ENCODE measurements at regions of chr9 and their contacts with region 1.

Region 1: GRCh38 chr9:120783602-120784047 is 9.6 kb downstream of the FBXW2 start:
- DNase-seq: peak; percentile 79 to 94 (median 91)
- H3K4me3 ChIP-seq: no peak overlapping the region
- H3K4me3 Mint-ChIP-seq: no peak overlapping the region
- H3K27ac ChIP-seq: peak overlapping the region in 1 of 2 donors; percentile 63
- H3K27ac Mint-ChIP-seq: peak overlapping the region; percentile 90 to 97 (median 95)
- H3K4me1 ChIP-seq: peaks cover 20 to 36% of the 10 kb centered on the region in 2 donors
- H3K4me1 Mint-ChIP-seq: peaks cover 38% of the 10 kb centered on the region
- H3K27me3 ChIP-seq: no peaks in the 10 kb centered on the region
- H3K27me3 Mint-ChIP-seq: no peaks in the 10 kb centered on the region
- CTCF ChIP-seq: no peak

Region 2: GRCh38 chr9:120663380-120663779 is 120.2 kb before region 1 on chr9:
- intact Hi-C with region 1: no loop called
- DNase-seq: peak; percentile 26 to 63 (median 46)
- H3K4me3 ChIP-seq: peak overlapping the region in 1 of 3 experiments; percentile 4
- H3K4me3 Mint-ChIP-seq: no peak overlapping the region
- H3K27ac ChIP-seq: peak overlapping the region in 1 of 2 donors; percentile 58
- H3K27ac Mint-ChIP-seq: peak overlapping the region in 5 of 7 donors; percentile 0 to 70 (median 64)
- H3K4me1 ChIP-seq: peaks cover 34 to 69% of the 10 kb centered on the region in 2 donors
- H3K4me1 Mint-ChIP-seq: peaks cover 83% of the 10 kb centered on the region
- H3K27me3 ChIP-seq: no peaks in the 10 kb centered on the region
- H3K27me3 Mint-ChIP-seq: no peaks in the 10 kb centered on the region
- CTCF ChIP-seq: no peak

Region 3: GRCh38 chr9:120742951-120743416 is 40.6 kb before region 1 on chr9:
- intact Hi-C with region 1: loop called (anchors 2 to 10 kb)
- DNase-seq: peak in 2 of 3 donors; percentile 51 to 57
- H3K4me3 ChIP-seq: no peak overlapping the region
- H3K4me3 Mint-ChIP-seq: no peak overlapping the region
- H3K27ac ChIP-seq: no peak overlapping the region
- H3K27ac Mint-ChIP-seq: peak overlapping the region in 1 of 7 donors; percentile 36
- H3K4me1 ChIP-seq: peaks cover 37 to 42% of the 10 kb centered on the region in 2 donors
- H3K4me1 Mint-ChIP-seq: peaks cover 34% of the 10 kb centered on the region
- H3K27me3 ChIP-seq: no peaks in the 10 kb centered on the region
- H3K27me3 Mint-ChIP-seq: no peaks in the 10 kb centered on the region
- CTCF ChIP-seq: peak; percentile 83

Measured in CD14-positive monocyte (primary cell).